CD8-positive, alpha-beta T cell (primary cell): ENCODE measurements at regions of chr1 and their contacts with region 1.

Region 1: GRCh38 chr1:179121159-179121938 is 39.5 kb downstream of the TOR3A start:
- DNase-seq: peak in 7 of 9 experiments; percentile 6 to 63 (median 50)
- ATAC-seq: peak; percentile 44
- H3K4me3 ChIP-seq: no peak overlapping the region
- H3K4me3 Mint-ChIP-seq: no peak overlapping the region
- H3K27ac ChIP-seq: no peak overlapping the region
- H3K27ac Mint-ChIP-seq: no peak overlapping the region
- H3K4me1 ChIP-seq: no peaks in the 10 kb centered on the region
- H3K4me1 Mint-ChIP-seq: no peaks in the 10 kb centered on the region
- H3K27me3 ChIP-seq: no peaks in the 10 kb centered on the region
- H3K27me3 Mint-ChIP-seq: no peaks in the 10 kb centered on the region
- CTCF ChIP-seq: peak; percentile 55

Region 2: DNA sequence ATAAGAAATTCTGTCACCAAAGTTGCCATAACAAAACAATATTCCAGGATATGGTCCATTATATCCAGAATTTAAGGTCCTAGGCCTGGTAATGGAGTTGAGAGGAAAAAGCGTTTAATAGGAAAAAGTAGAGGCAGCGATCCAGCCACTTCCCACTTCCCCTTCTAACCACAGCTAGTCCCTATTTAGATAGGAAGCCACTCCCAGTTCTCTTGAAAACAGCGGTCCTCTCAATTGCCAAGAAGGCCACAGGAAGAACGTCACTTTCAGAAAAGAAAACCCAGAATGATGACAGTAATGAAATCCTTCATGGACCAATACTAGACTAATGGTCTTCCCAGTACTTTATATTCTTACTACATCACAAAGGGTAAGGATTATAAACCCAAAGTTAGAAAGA is 69.5 kb after region 1 on chr1:
- CTCF ChIA-PET with region 1: no interaction called
- POLR2A ChIA-PET with region 1: no interaction called
- intact Hi-C with region 1: loop called (anchors 2 kb)
- DNase-seq: peak in 1 of 9 experiments; percentile 9
- ATAC-seq: no peak
- H3K4me3 ChIP-seq: no peak overlapping the region
- H3K4me3 Mint-ChIP-seq: no peak overlapping the region
- H3K27ac ChIP-seq: no peak overlapping the region
- H3K27ac Mint-ChIP-seq: no peak overlapping the region
- H3K4me1 ChIP-seq: no peaks in the 10 kb centered on the region
- H3K4me1 Mint-ChIP-seq: peaks cover 20% of the 10 kb centered on the region
- H3K27me3 ChIP-seq: no peaks in the 10 kb centered on the region
- H3K27me3 Mint-ChIP-seq: no peaks in the 10 kb centered on the region
- CTCF ChIP-seq: no peak

Region 3: DNA sequence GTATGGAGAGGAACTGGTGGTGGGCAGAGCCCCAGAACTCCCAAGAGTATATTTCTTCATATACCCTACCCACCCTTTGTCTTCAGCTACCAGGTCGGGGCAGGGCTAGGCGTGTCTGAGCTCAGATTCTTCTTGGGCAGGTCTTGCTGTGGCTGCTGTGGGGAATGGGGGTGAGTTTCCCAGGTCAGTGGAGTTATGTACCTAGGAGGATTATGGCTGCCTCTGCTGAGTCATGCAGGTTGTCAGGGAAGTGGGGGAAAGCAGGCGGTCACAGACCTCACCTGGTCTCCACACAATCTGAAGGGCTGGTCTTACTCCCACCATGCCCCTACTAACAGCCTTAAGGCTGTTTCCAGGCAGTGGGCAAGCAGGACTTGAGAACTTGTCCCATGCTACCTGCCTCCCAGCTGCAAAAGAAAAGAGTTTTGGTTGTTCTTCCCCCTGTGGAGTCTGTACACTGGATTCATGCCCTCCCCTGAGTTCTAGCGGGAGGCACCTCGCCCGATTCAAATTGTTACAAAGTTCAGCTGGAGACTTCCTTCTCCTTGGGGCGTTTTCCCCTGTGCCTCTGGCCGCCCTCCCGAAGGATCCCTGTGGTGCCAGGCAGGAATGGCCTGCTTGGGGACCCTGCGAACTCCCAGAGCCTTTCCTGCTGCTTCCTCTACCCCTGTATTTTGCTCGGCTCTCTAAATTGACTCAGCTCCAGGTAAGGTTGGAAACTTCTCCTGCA is 395.8 kb after region 1 on chr1:
- CTCF ChIA-PET with region 1: no interaction called
- POLR2A ChIA-PET with region 1: no interaction called
- intact Hi-C with region 1: no loop called
- DNase-seq: no peak
- ATAC-seq: no peak
- H3K4me3 ChIP-seq: no peak overlapping the region
- H3K4me3 Mint-ChIP-seq: no peak overlapping the region
- H3K27ac ChIP-seq: no peak overlapping the region
- H3K27ac Mint-ChIP-seq: no peak overlapping the region
- H3K4me1 ChIP-seq: no peaks in the 10 kb centered on the region
- H3K4me1 Mint-ChIP-seq: no peaks in the 10 kb centered on the region
- H3K27me3 ChIP-seq: no peaks in the 10 kb centered on the region
- H3K27me3 Mint-ChIP-seq: peaks cover 10% of the 10 kb centered on the region
- CTCF ChIP-seq: no peak